Activated B cell treated with CpG ODN at 0.5 μM for 24 hours (primary cell): ENCODE measurements at regions of chr13 and their contacts with region 1.

Region 1: DNA sequence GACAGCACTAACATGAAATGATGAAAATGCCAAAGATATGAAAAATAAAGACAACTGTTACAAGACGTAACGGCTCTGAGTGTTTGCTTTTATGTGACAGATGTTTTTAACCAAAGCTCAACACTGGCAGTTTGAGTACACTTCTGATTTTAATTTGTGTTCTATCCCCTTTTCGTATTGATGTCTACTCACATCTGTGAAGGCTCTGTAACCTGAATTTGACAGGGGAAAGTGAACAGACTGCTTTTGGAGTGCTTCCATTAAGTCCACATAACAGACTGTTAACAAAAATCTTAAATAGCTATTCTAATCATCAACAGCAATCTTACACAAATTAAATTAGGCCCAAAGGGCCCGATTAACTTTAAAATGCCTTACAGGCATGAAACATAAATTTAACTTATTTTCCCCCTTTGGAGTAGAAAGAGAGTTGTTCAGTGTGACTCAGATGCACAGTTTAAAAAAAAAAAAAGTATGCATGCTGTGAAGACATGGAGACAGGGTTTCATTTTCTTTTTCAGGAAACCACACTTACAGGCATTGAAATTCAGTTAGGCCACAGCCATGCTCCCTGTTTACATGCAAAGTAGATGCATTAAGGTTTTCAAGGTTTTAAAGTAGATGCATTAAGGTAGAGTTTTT is 16.3 kb upstream of the RNASEH2B start:
- DNase-seq: no peak
- ATAC-seq: peak; percentile 79
- H3K4me3 Mint-ChIP-seq: peak overlapping the region; percentile 78
- H3K27ac Mint-ChIP-seq: peak overlapping the region; percentile 96
- H3K4me1 Mint-ChIP-seq: peaks cover 65% of the 10 kb centered on the region
- H3K27me3 Mint-ChIP-seq: no peaks in the 10 kb centered on the region
- CTCF ChIP-seq: no peak

Region 2: DNA sequence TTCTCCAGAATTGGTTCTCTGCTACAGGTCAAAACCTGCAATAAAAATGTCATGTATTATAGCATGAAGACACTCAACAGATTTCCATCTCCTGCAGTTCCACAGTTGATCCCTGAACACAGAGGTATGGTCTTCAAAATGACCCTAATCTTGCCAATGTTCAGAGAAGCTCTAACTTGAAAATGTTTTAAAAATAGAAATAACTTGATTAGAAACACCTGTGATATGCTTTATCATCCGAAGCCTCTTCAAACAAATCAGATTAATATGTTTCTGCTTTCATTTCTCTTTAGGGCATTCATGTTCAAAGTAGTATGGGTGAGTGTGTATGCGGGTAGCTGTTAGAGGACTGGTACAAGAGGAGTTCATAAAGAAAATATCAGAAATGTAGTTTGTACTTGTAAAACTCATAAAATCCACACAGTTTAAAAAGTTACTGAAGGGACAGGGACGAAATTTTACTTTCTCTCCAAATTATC is 817.7 kb before region 1 on chr13:
- CTCF ChIA-PET with region 1: no interaction called
- POLR2A ChIA-PET with region 1: interaction called, 11 read pairs
- intact Hi-C with region 1: no loop called
- DNase-seq: no peak
- ATAC-seq: peak; percentile 53
- H3K4me3 Mint-ChIP-seq: peak overlapping the region; percentile 73
- H3K27ac Mint-ChIP-seq: peak overlapping the region; percentile 87
- H3K4me1 Mint-ChIP-seq: peaks cover 63% of the 10 kb centered on the region
- H3K27me3 Mint-ChIP-seq: no peaks in the 10 kb centered on the region
- CTCF ChIP-seq: no peak

Region 3: GRCh38 chr13:50810998-50811397 is 82.3 kb before region 1 on chr13:
- CTCF ChIA-PET with region 1: no interaction called
- POLR2A ChIA-PET with region 1: interaction called, 10 read pairs
- intact Hi-C with region 1: loop called (anchors 5 kb)
- DNase-seq: no peak
- ATAC-seq: peak; percentile 93
- H3K4me3 Mint-ChIP-seq: peak overlapping the region; percentile 65
- H3K27ac Mint-ChIP-seq: peak overlapping the region; percentile 84
- H3K4me1 Mint-ChIP-seq: peaks cover 43% of the 10 kb centered on the region
- H3K27me3 Mint-ChIP-seq: no peaks in the 10 kb centered on the region
- CTCF ChIP-seq: no peak